Spleen (tissue), 13 donors: ENCODE measurements at regions of chr5 and their contacts with region 1.

Region 1: DNA sequence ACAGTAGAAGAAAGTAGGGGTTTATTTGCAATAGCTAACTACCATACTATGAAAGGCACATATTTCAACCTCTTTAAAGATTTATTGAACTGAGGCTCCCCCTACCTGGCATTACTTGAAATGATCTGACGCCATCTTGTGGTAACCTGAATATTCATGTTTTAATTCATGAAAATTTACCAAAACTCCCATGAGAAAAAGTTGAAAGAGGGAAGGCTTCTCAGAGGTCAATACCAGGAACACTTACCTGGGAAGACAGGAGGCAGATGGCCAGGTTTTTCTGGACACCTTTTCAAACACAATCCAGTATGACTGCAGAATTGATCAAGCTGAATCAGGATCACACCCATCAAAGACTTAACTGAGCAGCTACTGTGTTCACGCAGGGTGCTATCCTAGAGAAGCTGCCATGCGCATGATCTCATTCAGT is 9.4 kb downstream of the PRELID2 start:
- DNase-seq: no peak
- H3K4me3 ChIP-seq: no peak overlapping the region
- H3K27ac ChIP-seq: no peak overlapping the region
- H3K4me1 ChIP-seq: peaks cover 0 to 14% (median 0%) of the 10 kb centered on the region in 6 donors
- H3K27me3 ChIP-seq: no peaks in the 10 kb centered on the region
- CTCF ChIP-seq: peak in 10 of 11 experiments; percentile 14 to 75 (median 64)
- POLR2A ChIP-seq: no peak

Region 2: GRCh38 chr5:144203750-144204596 is 1621.8 kb before region 1 on chr5:
- intact Hi-C with region 1: loop called (anchors 10 kb)
- DNase-seq: no peak
- H3K4me3 ChIP-seq: no peak overlapping the region
- H3K27ac ChIP-seq: no peak overlapping the region
- H3K4me1 ChIP-seq: peaks cover 0 to 8% (median 4%) of the 10 kb centered on the region in 6 donors
- H3K27me3 ChIP-seq: peaks cover 0 to 70% (median 26%) of the 10 kb centered on the region in 7 donors
- CTCF ChIP-seq: peak; percentile 66 to 91 (median 81)
- POLR2A ChIP-seq: no peak

Region 3: DNA sequence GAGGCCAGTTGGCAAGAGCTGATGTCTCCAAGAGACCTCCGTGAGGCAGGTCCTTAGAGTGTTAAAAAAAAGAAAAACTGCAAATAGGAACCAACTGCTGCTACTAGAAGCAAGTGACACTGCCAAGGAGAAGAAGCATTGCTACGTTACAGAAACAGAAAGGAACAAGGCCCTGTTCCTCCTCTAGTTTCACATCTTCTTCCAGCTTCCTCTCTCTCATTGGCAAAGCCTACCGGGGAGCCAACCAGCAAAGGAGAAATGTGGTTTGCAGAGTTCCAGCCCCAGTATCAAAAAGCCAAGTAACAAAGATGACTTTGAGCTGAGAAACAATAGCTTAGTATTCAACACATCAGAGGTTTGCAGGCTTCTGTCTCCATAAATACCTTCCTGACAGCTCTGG is 136.5 kb before region 1 on chr5:
- intact Hi-C with region 1: loop called (anchors 5 kb)
- DNase-seq: no peak
- H3K4me3 ChIP-seq: no peak overlapping the region
- H3K27ac ChIP-seq: peak overlapping the region in 4 of 8 donors; percentile 25 to 57 (median 40)
- H3K4me1 ChIP-seq: peaks cover 0 to 8% (median 0%) of the 10 kb centered on the region in 6 donors
- H3K27me3 ChIP-seq: no peaks in the 10 kb centered on the region
- CTCF ChIP-seq: no peak
- POLR2A ChIP-seq: no peak